ENCODE measurements at regions of chr3 and their contacts with region 1.

Region 1: GRCh38 chr3:193872265-193872753 is 263.6 kb upstream of the HES1 start:
- DNase-seq: no peak
- ATAC-seq: peak in 4 of 8 donors; percentile 17 to 29 (median 22)
- H3K4me3 ChIP-seq: no peak overlapping the region
- H3K27ac ChIP-seq: no peak overlapping the region
- H3K4me1 ChIP-seq: peaks cover 0 to 22% (median 9%) of the 10 kb centered on the region in 9 donors
- H3K27me3 ChIP-seq: peaks cover 0 to 35% (median 18%) of the 10 kb centered on the region in 7 donors
- CTCF ChIP-seq: no peak

Region 2: DNA sequence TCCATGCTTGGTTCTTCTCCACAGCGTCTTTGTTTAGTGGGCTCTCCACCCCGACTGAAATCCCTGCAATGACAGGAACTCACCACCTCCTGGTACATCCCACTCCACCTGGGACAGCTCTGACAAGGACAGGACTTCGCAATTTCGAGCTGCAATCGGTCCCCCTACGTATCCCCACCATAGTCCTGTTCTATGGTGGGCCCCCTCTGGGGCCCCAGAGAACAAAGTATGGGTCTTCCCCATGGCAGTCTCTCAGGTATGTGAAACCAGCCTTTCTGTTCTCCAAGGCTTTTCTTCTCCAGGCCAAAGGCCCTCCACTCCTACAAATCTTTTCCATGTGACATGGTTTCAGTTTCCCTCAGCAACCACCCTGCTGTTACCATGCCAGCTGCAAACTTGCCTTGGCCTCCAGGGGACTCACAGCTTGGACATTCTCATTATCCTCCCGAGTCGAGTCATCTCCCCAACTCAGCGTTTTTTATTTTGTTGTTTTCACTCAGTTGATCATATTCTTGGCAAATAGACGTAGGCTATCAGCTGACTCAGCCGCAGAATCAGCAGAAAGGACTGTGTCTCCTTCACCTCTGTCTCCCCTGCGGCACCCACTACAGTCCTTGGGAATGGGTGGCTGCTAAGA is 46.0 kb before region 1 on chr3:
- intact Hi-C with region 1: loop called in 1 of 10 experiments (anchors 10 kb)
- DNase-seq: peak in 1 of 2 donors; percentile 20
- ATAC-seq: peak in 4 of 8 donors; percentile 9 to 60 (median 21)
- H3K4me3 ChIP-seq: no peak overlapping the region
- H3K27ac ChIP-seq: no peak overlapping the region
- H3K4me1 ChIP-seq: peaks cover 0 to 10% (median 0%) of the 10 kb centered on the region in 9 donors
- H3K27me3 ChIP-seq: peaks cover 0 to 3% (median 0%) of the 10 kb centered on the region in 7 donors
- CTCF ChIP-seq: no peak

Region 3: DNA sequence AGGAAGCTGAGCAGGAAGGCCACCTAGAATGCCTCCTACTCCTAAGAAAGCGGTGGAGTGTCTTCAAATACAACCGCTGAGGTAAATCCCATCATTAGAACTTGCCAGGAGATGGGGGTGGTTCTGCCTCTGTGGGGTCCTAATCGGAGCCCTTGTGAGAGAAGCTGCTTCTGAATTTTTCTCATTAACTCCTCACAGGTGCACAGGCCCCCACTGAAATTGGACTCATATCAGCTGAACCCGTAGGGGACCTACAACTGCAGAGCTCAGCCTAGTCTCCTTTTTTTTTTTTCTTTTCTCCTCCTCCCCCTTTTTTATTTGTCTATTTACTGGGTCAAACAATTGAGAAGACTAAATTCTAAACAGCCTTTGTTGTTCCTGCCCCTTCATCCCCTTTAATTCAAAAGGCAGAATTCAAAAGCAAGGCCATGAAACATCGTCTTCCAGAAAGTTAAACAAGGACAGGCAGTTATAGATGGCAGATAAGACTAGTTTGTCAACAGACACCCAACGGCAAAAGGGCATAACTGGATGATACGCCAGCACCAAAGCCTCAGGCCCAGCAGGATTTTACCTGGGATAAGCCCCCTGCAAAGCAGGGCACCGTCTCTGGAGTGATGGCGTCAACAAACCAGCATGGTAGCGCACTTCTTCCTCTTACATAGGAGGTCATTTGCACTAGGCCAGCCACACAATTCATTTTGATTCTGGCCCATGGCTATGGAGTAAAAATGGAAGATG is 49.9 kb after region 1 on chr3:
- intact Hi-C with region 1: no loop called
- DNase-seq: no peak
- ATAC-seq: no peak
- H3K4me3 ChIP-seq: no peak overlapping the region
- H3K27ac ChIP-seq: no peak overlapping the region
- H3K4me1 ChIP-seq: no peaks in the 10 kb centered on the region
- H3K27me3 ChIP-seq: peaks cover 0 to 20% (median 0%) of the 10 kb centered on the region in 7 donors
- CTCF ChIP-seq: no peak

Region 4: GRCh38 chr3:194058189-194058571 is 185.9 kb after region 1 on chr3:
- intact Hi-C with region 1: loop called in 1 of 10 experiments (anchors 10 kb)
- DNase-seq: peak; percentile 64
- ATAC-seq: peak; percentile 81 to 91 (median 84)
- H3K4me3 ChIP-seq: peak overlapping the region in 9 of 10 donors; percentile 13 to 57 (median 44)
- H3K27ac ChIP-seq: peak overlapping the region in 6 of 10 donors; percentile 0 to 61 (median 42)
- H3K4me1 ChIP-seq: peaks cover 2 to 18% (median 12%) of the 10 kb centered on the region in 9 donors
- H3K27me3 ChIP-seq: peaks cover 0 to 39% (median 5%) of the 10 kb centered on the region in 7 donors
- CTCF ChIP-seq: no peak

Region 5: DNA sequence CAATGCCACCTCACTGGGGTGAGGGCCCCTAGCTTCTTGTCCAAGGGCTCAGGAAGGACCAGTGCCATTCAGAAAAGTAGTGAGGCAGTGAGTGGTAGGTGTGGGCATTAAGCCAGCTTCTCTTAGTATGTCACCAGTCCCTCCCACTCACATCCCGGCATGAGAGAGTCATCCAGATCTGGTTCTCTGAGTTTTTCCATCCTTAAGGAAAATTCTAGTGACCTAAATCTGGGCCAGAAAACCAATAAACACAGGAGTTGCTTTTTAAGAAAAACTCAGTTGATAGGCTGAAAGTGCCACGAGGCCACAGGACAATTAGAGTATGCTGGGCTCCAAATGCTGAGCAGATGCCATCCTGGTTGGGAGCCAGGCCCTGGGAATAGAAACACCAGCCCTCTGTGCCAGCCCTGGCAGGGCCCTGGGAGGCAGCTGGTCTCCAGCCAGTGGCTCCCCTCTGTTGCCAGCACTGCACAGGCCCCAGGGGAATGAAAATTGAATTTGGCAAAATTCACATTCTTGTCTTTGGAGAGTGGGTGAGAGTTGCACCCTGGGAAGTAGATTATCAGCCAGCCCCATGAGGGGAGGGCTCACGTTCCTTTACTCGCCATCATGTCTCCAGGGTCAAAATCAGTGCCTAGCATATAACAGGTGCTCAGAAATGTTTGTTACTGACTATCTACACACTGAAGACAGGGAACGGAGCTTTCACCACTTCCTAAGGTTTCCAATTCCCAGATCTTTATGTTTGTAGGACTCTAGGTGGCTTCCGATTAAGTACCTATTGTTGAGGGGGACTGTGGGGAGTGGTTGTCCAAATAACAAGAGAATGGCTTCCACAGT is 866.2 kb after region 1 on chr3:
- intact Hi-C with region 1: no loop called
- DNase-seq: peak; percentile 75 to 79
- ATAC-seq: peak; percentile 89 to 98 (median 96)
- H3K4me3 ChIP-seq: no peak overlapping the region
- H3K27ac ChIP-seq: peak overlapping the region in 6 of 10 donors; percentile 17 to 59 (median 42)
- H3K4me1 ChIP-seq: peaks cover 5 to 46% (median 28%) of the 10 kb centered on the region in 9 donors
- H3K27me3 ChIP-seq: no peaks in the 10 kb centered on the region
- CTCF ChIP-seq: no peak